ENCODE measurements at regions of chr6 and their contacts with region 1.

Region 1: DNA sequence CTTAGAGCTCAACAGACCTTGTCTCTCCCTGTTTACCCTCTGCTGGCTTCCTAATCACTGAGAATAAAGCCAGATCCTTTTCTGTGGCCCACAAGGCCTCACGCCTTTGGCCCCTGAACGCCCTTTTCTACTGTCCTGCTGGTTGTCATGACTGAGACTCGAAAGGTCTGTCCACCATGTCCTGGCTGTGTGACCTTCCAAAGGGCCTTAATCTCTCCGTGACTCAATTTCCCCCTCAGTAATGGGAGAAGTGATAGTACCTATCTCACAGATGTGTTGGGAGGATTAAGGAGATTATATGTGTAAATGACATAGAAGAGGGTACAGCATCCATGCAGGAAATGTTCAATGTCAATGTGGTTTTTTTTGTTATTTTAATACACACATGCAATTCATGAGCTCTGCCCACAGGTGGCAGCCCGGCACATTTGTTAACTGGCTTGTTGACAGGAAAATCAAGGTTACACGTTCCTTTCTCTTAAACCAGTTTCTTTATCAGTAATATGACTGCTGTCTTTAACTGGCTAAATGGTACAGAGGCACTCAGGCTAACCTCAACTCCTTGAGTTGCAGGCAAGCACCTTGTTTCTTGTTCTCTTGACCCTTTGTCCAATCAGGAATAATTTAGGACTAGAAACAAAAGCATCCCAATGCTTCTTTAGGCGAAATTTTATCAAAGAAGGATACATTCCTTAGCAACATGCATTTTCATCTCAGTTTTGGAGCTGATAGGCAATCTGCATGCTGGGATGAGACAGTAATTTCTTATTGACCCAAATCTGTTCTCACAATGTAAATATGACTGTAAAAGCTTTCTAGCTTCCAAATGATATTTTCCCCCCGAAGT is 16.6 kb downstream of the SLC22A1 start:
- DNase-seq: peak; percentile 85
- H3K4me3 Mint-ChIP-seq: no peak overlapping the region
- H3K27ac Mint-ChIP-seq: peak overlapping the region; percentile 16
- H3K4me1 Mint-ChIP-seq: peaks cover 17% of the 10 kb centered on the region
- H3K27me3 Mint-ChIP-seq: no peaks in the 10 kb centered on the region

Region 2: DNA sequence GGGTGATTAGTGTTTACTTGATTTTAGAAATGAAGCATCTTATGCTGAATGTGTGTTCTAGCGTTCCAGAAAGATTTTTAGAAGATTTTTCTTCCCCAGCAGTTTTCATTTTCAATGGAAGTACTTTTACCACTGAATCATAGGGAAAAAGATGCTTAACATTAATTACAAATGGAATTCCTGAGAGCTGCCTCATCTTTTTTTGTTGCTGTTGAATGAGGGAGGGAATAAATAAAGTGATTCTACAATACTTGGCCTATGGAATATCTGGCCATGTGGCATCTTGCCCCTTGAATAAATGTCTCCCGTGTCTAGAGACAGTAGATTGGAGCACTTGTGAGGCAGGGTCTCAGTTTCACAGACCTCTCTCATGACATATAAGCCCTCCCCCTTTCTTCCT is 60.7 kb before region 1 on chr6:
- CTCF ChIA-PET with region 1: no interaction called
- intact Hi-C with region 1: no loop called
- DNase-seq: no peak
- H3K4me3 Mint-ChIP-seq: no peak overlapping the region
- H3K27ac Mint-ChIP-seq: no peak overlapping the region
- H3K4me1 Mint-ChIP-seq: peaks cover 4% of the 10 kb centered on the region
- H3K27me3 Mint-ChIP-seq: no peaks in the 10 kb centered on the region

Region 3: GRCh38 chr6:160273196-160273595 is 135.0 kb after region 1 on chr6:
- CTCF ChIA-PET with region 1: no interaction called
- intact Hi-C with region 1: loop called (anchors 2 kb)
- DNase-seq: no peak
- H3K4me3 Mint-ChIP-seq: no peak overlapping the region
- H3K27ac Mint-ChIP-seq: no peak overlapping the region
- H3K4me1 Mint-ChIP-seq: no peaks in the 10 kb centered on the region
- H3K27me3 Mint-ChIP-seq: peaks cover 2% of the 10 kb centered on the region

Region 4: GRCh38 chr6:160367798-160368547 is 229.8 kb after region 1 on chr6:
- CTCF ChIA-PET with region 1: interaction called, 3 read pairs
- intact Hi-C with region 1: loop called (anchors 5 kb)
- DNase-seq: no peak
- H3K4me3 Mint-ChIP-seq: no peak overlapping the region
- H3K27ac Mint-ChIP-seq: no peak overlapping the region
- H3K4me1 Mint-ChIP-seq: no peaks in the 10 kb centered on the region
- H3K27me3 Mint-ChIP-seq: peaks cover 3% of the 10 kb centered on the region

Region 5: GRCh38 chr6:160534050-160534696 is 396.0 kb after region 1 on chr6:
- CTCF ChIA-PET with region 1: interaction called, 4 read pairs
- intact Hi-C with region 1: loop called (anchors 1 kb)
- DNase-seq: peak; percentile 69
- H3K4me3 Mint-ChIP-seq: no peak overlapping the region
- H3K27ac Mint-ChIP-seq: no peak overlapping the region
- H3K4me1 Mint-ChIP-seq: no peaks in the 10 kb centered on the region
- H3K27me3 Mint-ChIP-seq: no peaks in the 10 kb centered on the region